ENCODE measurements at regions of chr1 and their contacts with region 1.

Region 1: GRCh38 chr1:23691499-23692307 is at the start of gene RPL11:
- DNase-seq: peak; percentile 92
- ATAC-seq: peak; percentile 98
- H3K4me3 ChIP-seq: peak within 1 kb of the TSS; percentile 96 to 100 (median 96)
- H3K27ac ChIP-seq: peak within 1 kb of the TSS; percentile 86
- H3K4me1 ChIP-seq: peaks cover 46% of the 10 kb centered on the region
- H3K27me3 ChIP-seq: no peaks in the 10 kb centered on the region; a peak in 1 of 5 replicates
- CTCF ChIP-seq: peak; percentile 84
- EP300 ChIP-seq: 0 out of 4 replicates have a peak, but pooled peaks of 1 of the 2 experiments have one; percentile 38
- POLR2A ChIP-seq: peak; percentile 94 to 99
- RAD21 ChIP-seq: peak; percentile 38; the same call in 1 of the 2 replicates
- total RNA-seq, gene RPL11: 2,010 and 2,638 TPM in 2 replicates

Region 2: GRCh38 chr1:23651069-23651808 is 40.5 kb before region 1 on chr1:
- CTCF ChIA-PET with region 1: no interaction called
- POLR2A ChIA-PET with region 1: no interaction called
- in situ Hi-C with region 1: no loop called
- intact Hi-C with region 1: no loop called
- DNase-seq: no peak
- ATAC-seq: peak; percentile 45
- H3K4me3 ChIP-seq: no peak overlapping the region
- H3K27ac ChIP-seq: no peak overlapping the region
- H3K4me1 ChIP-seq: peaks cover 10% of the 10 kb centered on the region; the same call in 1 of the 2 replicates
- H3K27me3 ChIP-seq: peaks cover 2 to 23% of the 10 kb centered on the region in 2 experiments; a peak in 2 of 5 replicates
- CTCF ChIP-seq: no peak
- EP300 ChIP-seq: no peak
- POLR2A ChIP-seq: no peak
- RAD21 ChIP-seq: no peak

Region 3: DNA sequence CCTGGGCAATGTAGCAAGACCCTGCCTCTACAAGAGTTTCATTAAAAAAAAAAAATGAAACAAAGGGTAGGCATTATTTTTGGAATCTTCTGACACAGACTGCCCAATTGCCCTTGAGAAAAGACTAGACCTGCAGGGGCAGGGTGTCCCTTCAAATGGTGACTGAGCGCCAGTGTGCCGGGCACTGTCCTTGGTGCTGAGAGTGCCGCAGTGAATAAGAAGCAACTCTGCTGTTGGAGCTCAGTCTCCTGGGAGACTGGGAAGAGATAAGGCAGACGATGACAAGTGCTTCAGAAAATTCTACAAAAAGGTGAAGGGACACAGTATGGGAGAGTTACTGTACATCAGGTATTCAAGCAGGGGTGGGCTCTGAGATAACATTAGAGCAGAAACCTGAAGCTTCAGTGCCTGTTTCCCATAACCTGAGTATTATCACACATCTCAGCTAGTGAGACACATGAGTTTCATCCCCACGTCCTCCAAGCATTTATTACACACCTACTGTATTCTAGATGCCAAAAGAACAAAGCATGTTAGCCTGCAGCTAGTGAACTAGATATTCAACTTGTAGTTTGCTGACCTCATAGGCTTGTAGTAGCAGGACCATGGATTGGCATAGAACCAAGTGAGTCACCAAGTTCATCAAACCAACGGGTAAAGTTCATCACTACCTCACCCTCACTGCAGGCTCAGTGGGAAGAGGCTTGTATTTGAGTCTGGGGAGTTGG is 18.5 kb before region 1 on chr1:
- CTCF ChIA-PET with region 1: no interaction called
- POLR2A ChIA-PET with region 1: interaction called, 12 read pairs
- in situ Hi-C with region 1: no loop called
- intact Hi-C with region 1: no loop called
- DNase-seq: peak; percentile 60
- ATAC-seq: peak; percentile 81
- H3K4me3 ChIP-seq: no peak overlapping the region
- H3K27ac ChIP-seq: no peak overlapping the region
- H3K4me1 ChIP-seq: peaks cover 15% of the 10 kb centered on the region
- H3K27me3 ChIP-seq: no peaks in the 10 kb centered on the region; a peak in 1 of 5 replicates
- CTCF ChIP-seq: peak; percentile 27
- EP300 ChIP-seq: no peak
- POLR2A ChIP-seq: no peak
- RAD21 ChIP-seq: no peak

Region 4: GRCh38 chr1:23727362-23727827 is 35.7 kb after region 1 on chr1:
- CTCF ChIA-PET with region 1: no interaction called
- POLR2A ChIA-PET with region 1: interaction called, 18 read pairs
- in situ Hi-C with region 1: no loop called
- intact Hi-C with region 1: no loop called
- DNase-seq: peak; percentile 78
- ATAC-seq: peak; percentile 89
- H3K4me3 ChIP-seq: peak overlapping the region in 1 of 3 experiments; percentile 24; a peak in 3 of 6 replicates
- H3K27ac ChIP-seq: peak overlapping the region; percentile 54
- H3K4me1 ChIP-seq: peaks cover 38% of the 10 kb centered on the region
- H3K27me3 ChIP-seq: no peaks in the 10 kb centered on the region
- CTCF ChIP-seq: no peak
- EP300 ChIP-seq: peak in 1 of 2 experiments; percentile 59; a peak in 1 of 4 replicates
- POLR2A ChIP-seq: no peak
- RAD21 ChIP-seq: no peak

Region 5: GRCh38 chr1:23743287-23744052 is 51.8 kb after region 1 on chr1 and contains the start of gene ELOA:
- CTCF ChIA-PET with region 1: no interaction called
- POLR2A ChIA-PET with region 1: interaction called, 42 read pairs
- in situ Hi-C with region 1: loop called (anchors 5 kb)
- intact Hi-C with region 1: no loop called
- DNase-seq: peak; percentile 35
- ATAC-seq: peak; percentile 93
- H3K4me3 ChIP-seq: peak within 1 kb of the TSS; percentile 81 to 98 (median 93)
- H3K27ac ChIP-seq: peak within 1 kb of the TSS; percentile 79
- H3K4me1 ChIP-seq: peaks cover 37% of the 10 kb centered on the region
- H3K27me3 ChIP-seq: no peaks in the 10 kb centered on the region; a peak in 1 of 5 replicates
- CTCF ChIP-seq: no peak; the same call in 1 of the 2 replicates
- EP300 ChIP-seq: no peak
- POLR2A ChIP-seq: peak; percentile 77 to 95
- RAD21 ChIP-seq: peak; percentile 23; the same call in 1 of the 2 replicates
- total RNA-seq, gene ELOA: 28.5 and 36.3 TPM in 2 replicates

Region 6: GRCh38 chr1:23751050-23751814 is 59.5 kb after region 1 on chr1:
- CTCF ChIA-PET with region 1: interaction called, 5 read pairs
- POLR2A ChIA-PET with region 1: interaction called, 42 read pairs
- in situ Hi-C with region 1: loop called (anchors 5 kb)
- intact Hi-C with region 1: loop called (anchors 5 kb)
- DNase-seq: peak; percentile 67
- ATAC-seq: peak; percentile 97
- H3K4me3 ChIP-seq: no peak overlapping the region
- H3K27ac ChIP-seq: no peak overlapping the region
- H3K4me1 ChIP-seq: peaks cover 28% of the 10 kb centered on the region
- H3K27me3 ChIP-seq: no peaks in the 10 kb centered on the region
- CTCF ChIP-seq: peak; percentile 83
- EP300 ChIP-seq: no peak
- POLR2A ChIP-seq: no peak
- RAD21 ChIP-seq: peak; percentile 69; the same call in 1 of the 2 replicates